Cardiac septum (tissue), 1 donor: ENCODE measurements at regions of chr12 and their contacts with region 1.

Region 1: DNA sequence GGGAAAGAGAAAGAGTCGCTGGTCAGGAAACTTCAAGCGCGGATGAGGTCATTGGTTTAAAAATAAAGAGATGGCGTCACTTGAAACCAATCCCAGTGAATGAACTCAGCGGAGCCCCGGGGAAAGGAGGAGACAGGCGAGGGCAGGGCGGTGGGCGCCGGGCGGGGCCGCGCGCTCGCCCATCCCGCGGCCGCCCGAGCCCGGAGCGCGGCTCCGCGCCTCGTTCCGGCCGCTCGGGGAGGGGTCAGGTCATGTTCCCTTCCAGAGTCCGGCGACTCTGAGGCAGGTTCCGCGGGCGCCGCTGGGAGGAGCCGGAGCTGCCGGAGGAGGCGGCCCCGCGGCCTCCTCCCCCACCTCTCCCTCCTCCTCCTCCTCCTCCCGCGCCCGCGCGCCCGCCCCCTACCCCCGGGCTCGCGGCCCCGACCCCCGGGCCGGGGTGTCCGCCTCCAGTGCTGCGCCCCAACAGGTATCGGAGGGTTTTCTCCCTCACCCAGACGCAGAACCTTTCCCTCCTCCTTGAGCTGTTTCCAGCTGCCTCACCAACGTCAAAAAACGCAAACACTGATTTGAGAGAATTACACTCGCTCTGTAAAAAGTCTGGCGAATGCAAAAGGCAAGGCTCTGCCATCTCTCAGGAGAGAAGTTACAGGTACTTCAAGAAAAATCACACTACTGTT is at the start of gene DUSP16:
- DNase-seq: peak; percentile 97
- total RNA-seq, gene DUSP16: 24.5 TPM

Region 2: DNA sequence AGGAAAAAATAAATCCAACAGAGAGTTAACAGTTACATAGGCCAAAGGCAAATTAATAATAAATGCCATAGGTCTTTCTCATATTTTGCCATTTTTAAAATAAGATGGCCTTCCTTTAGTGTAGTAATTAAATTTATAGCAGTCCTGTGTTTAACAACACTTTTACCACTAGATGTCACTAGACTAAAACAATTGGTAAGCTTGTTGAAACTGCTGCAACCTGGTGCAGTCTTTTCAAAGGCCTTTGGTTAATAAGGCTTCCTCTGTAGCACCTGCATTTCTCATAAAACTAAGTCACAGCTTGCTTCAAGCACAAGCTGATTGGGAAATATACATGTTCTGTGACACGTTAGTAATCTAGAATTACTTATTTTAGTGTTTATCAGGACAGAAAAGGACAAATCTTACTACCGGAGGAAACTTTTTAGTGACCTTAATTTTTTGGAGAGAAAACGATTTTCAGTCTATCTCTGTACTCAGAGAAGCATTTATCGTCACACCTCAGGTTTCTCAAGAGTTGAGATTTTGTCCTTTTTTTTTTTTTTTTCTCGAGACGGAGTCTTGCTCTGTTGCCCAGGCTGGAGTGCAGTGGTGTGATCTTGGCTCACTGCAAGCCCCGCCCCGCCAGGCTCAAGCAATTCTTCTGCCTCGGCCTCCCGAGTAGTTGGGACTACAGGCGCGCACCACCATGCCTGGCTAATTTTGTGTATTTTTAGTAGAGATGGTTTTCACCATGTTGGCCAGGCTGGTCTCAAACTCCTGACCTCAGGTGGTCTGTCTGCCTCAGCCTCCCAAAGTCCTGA is 185.9 kb before region 1 on chr12:
- intact Hi-C with region 1: loop called (anchors 2 kb)
- DNase-seq: no peak

Region 3: GRCh38 chr12:12442548-12443071 is 120.1 kb before region 1 on chr12:
- intact Hi-C with region 1: loop called (anchors 5 kb)
- DNase-seq: no peak

Region 4: DNA sequence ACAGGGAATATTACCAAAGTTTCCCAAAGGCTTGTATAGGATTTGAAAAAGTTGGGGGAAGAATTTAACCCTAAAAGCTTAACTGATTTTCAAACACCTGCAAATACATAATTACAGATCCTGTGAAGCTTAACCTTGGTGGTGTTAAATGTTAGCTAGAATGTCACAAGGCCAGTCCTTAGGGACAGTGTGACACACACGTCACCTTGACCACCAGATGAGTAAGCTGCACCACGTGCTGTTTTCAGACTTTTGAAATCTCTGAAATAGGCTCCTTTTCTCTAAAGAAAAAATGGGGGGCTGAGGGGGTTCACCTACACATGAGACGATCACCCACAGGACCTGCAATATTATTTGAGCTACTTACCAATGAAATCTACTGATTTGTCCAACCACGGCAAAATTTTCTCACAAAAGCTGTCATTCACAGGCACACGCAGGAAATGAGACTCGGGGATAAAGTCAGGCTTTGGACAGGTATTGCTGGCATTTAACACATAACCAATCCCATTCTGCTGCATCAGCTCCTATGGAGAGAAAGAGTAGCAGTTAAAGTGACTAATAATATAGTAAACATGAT is 76.0 kb before region 1 on chr12:
- intact Hi-C with region 1: no loop called
- DNase-seq: no peak

Region 5: GRCh38 chr12:12505544-12506495 is 56.9 kb before region 1 on chr12:
- intact Hi-C with region 1: loop called (anchors 1 kb)
- DNase-seq: no peak

Region 6: DNA sequence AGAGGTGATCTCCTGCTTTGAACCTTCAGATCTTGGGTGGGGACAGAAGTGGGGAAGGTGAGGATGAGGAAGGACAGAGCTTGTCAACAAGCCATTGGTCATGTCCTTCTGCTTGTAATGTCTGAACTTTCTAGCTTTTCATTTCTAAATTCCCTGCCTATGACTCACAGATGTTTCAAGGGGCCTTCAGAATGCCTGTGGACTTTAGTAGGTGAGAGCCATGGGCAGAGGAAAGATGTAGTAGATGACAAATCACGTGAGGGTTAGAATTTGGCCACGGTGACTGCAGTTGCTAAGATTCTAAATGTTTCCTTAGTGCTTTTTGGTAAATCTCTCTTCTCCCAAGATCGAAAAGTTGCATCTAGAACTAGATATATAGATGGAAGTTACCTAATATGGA is 30.2 kb after region 1 on chr12:
- intact Hi-C with region 1: no loop called
- DNase-seq: no peak

Region 7: DNA sequence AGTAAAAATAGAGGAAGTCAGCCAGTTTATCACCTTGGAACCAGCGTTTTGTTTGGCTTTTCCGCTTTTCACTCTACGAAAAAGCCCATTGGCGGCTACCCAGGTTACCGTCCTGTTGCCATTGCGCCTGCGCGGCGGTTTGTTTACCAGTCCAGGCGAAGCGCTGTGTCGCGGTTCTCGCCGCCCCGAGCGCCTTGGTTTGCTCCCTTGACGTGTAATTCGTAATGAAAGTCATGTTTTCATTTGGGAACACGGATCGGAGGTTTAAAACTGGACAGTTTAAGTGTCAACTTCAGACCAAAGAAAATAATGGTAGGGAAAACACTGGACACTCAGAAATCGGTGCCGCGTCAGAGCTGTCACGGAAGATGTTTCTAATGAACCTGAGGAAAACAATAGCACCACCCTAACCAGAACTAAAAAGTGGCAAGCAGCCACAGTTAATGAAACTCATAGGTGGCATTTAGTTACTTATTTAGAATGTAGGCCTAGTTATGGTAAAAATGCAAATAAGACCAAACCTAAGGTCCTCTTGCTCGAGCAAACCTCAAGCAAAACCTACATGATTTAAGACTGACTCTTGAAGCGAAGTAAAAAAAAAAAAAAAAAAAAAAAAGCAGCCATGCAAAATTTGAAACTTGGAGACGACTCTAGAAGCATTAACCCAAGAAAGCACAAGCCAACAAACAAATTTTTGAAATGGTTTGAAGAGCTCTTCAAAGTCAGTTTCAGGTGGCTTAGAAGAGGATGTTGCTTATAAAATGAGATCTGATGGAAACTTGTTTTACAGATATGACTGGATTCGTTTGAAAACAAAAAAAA is 134.1 kb after region 1 on chr12:
- intact Hi-C with region 1: loop called (anchors 5 kb)
- DNase-seq: peak; percentile 96

Region 8: DNA sequence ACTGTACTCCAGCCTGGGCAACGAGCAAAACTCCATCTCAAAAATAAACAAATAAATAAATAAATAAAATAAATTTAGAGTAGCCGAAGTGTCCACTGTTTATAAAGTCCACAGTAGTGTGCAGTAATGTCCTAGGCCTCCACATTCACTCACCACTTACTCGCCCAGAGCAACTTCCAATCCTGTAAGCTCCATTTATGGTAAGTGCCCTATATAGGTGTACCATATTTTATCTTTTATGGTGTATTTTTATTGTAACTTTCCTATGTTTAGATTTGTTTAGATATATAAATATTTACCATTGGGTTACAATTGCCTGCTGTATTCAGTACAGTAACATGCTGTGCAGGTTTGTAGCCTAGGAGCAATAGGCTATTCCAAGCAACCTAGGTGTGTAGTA is 290.7 kb after region 1 on chr12:
- intact Hi-C with region 1: no loop called
- DNase-seq: no peak